ENCODE measurements at regions of chr16 and their contacts with region 1.

Region 1: GRCh38 chr16:50210266-50211038 is 55.9 kb upstream of the ADCY7 start:
- DNase-seq: peak; percentile 80
- ATAC-seq: peak; percentile 95
- H3K4me3 Mint-ChIP-seq: no peak overlapping the region
- H3K27ac Mint-ChIP-seq: peak overlapping the region; percentile 41
- H3K4me1 Mint-ChIP-seq: peaks cover 32% of the 10 kb centered on the region
- H3K27me3 Mint-ChIP-seq: no peaks in the 10 kb centered on the region

Region 2: DNA sequence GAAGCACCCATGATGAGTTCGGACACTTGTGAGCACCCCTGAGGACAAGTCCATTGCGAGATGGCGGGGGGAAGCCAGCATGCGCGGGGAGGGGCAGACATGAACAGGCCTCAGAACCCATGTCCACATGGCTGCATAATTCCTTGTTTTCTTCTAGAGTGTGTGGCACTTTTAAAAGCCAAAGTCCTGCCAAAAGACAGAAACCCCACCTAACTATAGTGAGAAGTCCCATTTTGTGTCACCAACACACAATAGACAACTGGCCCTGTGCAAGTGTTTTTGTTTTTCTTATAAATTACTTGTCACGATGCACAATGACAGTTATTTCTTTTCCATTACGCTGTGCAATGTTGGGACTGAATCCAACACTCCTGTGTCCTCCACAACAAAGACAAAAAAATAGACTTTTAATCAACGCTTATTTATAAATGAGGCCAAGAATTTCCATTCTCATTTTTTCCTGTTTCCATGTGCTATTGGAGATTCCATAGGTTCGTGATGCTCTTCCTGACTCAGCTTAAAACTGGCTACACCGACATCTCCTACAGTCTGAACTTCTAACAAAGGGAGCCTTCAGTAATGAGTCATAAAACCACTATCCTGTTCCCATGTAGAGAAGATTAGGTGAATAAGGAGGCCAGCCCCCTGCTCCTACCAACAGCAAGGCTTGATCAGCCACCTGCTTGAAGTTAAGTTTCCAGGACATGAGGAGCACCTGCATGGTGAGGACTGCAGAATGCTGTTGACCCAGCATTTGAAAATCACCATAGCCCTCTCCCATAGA is 453.5 kb before region 1 on chr16:
- CTCF ChIA-PET with region 1: no interaction called
- POLR2A ChIA-PET with region 1: no interaction called
- DNase-seq: no peak
- ATAC-seq: no peak
- H3K4me3 Mint-ChIP-seq: no peak overlapping the region
- H3K27ac Mint-ChIP-seq: no peak overlapping the region
- H3K4me1 Mint-ChIP-seq: peaks cover 12% of the 10 kb centered on the region
- H3K27me3 Mint-ChIP-seq: peaks cover 20% of the 10 kb centered on the region

Region 3: GRCh38 chr16:50081428-50082018 is 128.9 kb before region 1 on chr16:
- CTCF ChIA-PET with region 1: interaction called, 16 read pairs
- POLR2A ChIA-PET with region 1: no interaction called
- DNase-seq: no peak
- ATAC-seq: no peak
- H3K4me3 Mint-ChIP-seq: no peak overlapping the region
- H3K27ac Mint-ChIP-seq: peak overlapping the region; percentile 47
- H3K4me1 Mint-ChIP-seq: peaks cover 15% of the 10 kb centered on the region
- H3K27me3 Mint-ChIP-seq: no peaks in the 10 kb centered on the region

Region 4: GRCh38 chr16:50152807-50153452 is 57.5 kb before region 1 on chr16 and contains the start of gene TENT4B:
- CTCF ChIA-PET with region 1: interaction called, 31 read pairs
- POLR2A ChIA-PET with region 1: no interaction called
- DNase-seq: peak; percentile 91
- ATAC-seq: peak; percentile 80
- H3K4me3 Mint-ChIP-seq: peak within 1 kb of the TSS; percentile 88
- H3K27ac Mint-ChIP-seq: peak within 1 kb of the TSS; percentile 95
- H3K4me1 Mint-ChIP-seq: peaks cover 32% of the 10 kb centered on the region
- H3K27me3 Mint-ChIP-seq: no peaks in the 10 kb centered on the region
- total RNA-seq, gene TENT4B: 17.3 to 18.0 TPM

Region 5: GRCh38 chr16:50185005-50185505 is 25.4 kb before region 1 on chr16:
- CTCF ChIA-PET with region 1: interaction called, 10 read pairs
- POLR2A ChIA-PET with region 1: no interaction called
- DNase-seq: no peak
- ATAC-seq: no peak
- H3K4me3 Mint-ChIP-seq: no peak overlapping the region
- H3K27ac Mint-ChIP-seq: no peak overlapping the region
- H3K4me1 Mint-ChIP-seq: peaks cover 9% of the 10 kb centered on the region
- H3K27me3 Mint-ChIP-seq: no peaks in the 10 kb centered on the region

Region 6: DNA sequence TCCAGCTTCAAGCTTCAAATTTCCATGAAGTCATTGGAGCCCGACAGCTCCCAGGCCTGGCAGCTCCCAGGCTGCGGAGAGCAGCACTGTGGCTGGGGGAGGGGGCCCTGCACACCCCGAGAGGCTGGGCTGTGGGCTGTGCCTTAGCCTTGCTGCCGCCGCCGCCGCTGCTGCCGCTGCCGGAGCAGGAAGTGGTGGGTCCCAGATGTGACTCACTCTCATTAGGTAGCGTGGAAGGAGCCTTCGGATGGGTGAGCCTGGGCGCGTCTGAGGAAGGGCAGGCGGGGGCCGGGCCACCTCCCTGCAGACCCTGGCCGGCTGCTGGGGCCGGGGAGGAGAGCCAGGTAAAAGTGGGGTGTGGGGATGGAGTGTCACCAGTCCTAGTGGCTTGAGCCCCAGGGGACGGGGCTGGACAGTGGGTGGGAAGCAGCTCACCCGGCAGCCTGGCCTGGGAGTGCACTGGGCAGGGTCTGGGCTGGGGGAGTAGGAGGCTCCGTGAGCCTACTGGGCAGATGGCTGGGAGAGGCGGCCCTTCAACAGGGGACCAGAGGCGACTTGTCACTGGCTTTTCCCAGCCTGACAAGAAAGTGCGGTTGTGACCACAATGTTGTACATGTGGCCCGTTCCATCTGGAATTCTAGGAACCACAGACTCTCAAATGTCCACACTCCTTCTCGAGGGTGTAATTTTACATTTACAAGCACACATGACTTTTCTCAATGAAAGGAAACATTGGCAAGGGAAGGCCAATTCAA is 56.1 kb after region 1 on chr16 and contains the start of gene ADCY7:
- CTCF ChIA-PET with region 1: interaction called, 10 read pairs
- POLR2A ChIA-PET with region 1: no interaction called
- DNase-seq: peak; percentile 90
- ATAC-seq: peak; percentile 91
- H3K4me3 Mint-ChIP-seq: peak within 1 kb of the TSS; percentile 98
- H3K27ac Mint-ChIP-seq: peak within 1 kb of the TSS; percentile 98
- H3K4me1 Mint-ChIP-seq: peaks cover 83% of the 10 kb centered on the region
- H3K27me3 Mint-ChIP-seq: no peaks in the 10 kb centered on the region
- total RNA-seq, gene ADCY7: 214 to 225 TPM

Region 7: GRCh38 chr16:50354629-50355456 is 144.4 kb after region 1 on chr16:
- CTCF ChIA-PET with region 1: interaction called, 50 read pairs
- POLR2A ChIA-PET with region 1: no interaction called
- DNase-seq: no peak
- ATAC-seq: no peak
- H3K4me3 Mint-ChIP-seq: no peak overlapping the region
- H3K27ac Mint-ChIP-seq: no peak overlapping the region
- H3K4me1 Mint-ChIP-seq: peaks cover 30% of the 10 kb centered on the region
- H3K27me3 Mint-ChIP-seq: no peaks in the 10 kb centered on the region